ENCODE measurements at regions of chr18 and their contacts with region 1.

Region 1: GRCh38 chr18:6781786-6782185 is 52.3 kb downstream of the ARHGAP28 start:
- DNase-seq: no peak
- H3K4me3 ChIP-seq: no peak overlapping the region
- H3K27ac ChIP-seq: peak overlapping the region in 1 of 2 donors; percentile 3
- H3K4me1 ChIP-seq: no peaks in the 10 kb centered on the region
- H3K27me3 ChIP-seq: no peaks in the 10 kb centered on the region
- CTCF ChIP-seq: no peak
- POLR2A ChIP-seq: no peak

Region 2: GRCh38 chr18:6543330-6543908 is 238.4 kb before region 1 on chr18:
- intact Hi-C with region 1: loop called (anchors 10 kb)
- DNase-seq: no peak
- H3K4me3 ChIP-seq: no peak overlapping the region
- H3K27ac ChIP-seq: no peak overlapping the region
- H3K4me1 ChIP-seq: no peaks in the 10 kb centered on the region
- H3K27me3 ChIP-seq: no peaks in the 10 kb centered on the region
- CTCF ChIP-seq: peak in 3 of 4 experiments; percentile 59 to 66 (median 65)
- POLR2A ChIP-seq: no peak